A549 (cell line): ENCODE measurements at regions of chr4 and their contacts with region 1.

Region 1: DNA sequence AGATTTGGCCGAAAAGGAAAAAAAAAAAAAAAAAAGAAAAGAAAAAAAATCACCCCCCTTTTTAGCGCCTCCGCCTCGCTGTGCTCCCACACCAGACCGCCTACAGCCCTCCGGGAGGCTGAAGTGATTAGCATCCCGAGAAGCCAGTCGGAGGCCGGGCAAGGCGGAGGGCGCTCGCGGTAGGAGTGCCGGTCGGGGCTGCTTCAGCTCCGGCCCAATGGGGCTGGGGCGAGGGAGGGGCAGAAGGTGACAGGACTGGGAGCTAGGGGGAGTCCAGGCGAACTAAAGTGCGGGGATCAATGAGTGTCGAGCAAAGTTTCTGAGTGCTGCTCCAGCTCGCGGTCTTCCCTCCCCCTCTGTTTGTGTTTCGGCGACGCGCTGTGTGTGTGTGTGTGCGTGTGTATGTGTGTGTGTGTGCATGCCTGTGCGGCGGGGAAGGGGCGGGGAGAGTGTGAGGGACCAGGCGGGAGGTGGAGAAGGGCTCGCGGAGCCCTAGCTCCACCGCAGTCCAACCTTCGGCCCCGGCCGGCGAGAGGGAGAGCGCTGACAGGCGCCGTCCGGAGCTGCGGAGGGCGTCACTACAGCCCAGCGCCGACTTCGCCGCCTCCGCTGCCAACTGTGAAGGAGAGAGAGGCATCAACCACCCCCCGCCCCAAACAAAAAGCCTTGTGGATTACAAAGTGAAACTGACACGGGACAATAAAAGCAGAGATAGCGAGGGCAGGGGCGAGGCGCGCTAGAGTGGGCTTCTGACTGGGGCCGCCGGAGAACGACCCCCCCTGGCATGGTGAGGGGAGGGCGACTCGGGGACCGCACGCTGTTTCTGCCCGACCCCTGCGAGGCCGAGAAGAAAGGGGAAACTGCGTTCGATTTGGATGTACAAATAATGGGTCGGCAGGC is at the start of gene FAT4:
- DNase-seq: peak; percentile 67 to 88
- ATAC-seq: peak; percentile 80 to 91
- H3K4me3 ChIP-seq: peak within 1 kb of the TSS; percentile 87
- H3K27ac ChIP-seq: peak within 1 kb of the TSS; percentile 47 to 79; a peak in 5 of 6 replicates
- H3K4me1 ChIP-seq: peaks cover 7% of the 10 kb centered on the region; the same call in 2 of the 3 replicates
- CTCF ChIP-seq: no peak
- EP300 ChIP-seq: no peak
- POLR2A ChIP-seq: peak; percentile 13; the same call in 1 of the 2 replicates
- RAD21 ChIP-seq: no peak
- polyA plus RNA-seq, gene FAT4: 1.1 and 1.4 TPM in 2 replicates

Region 2: GRCh38 chr4:125072269-125072668 is 242.7 kb before region 1 on chr4:
- CTCF ChIA-PET with region 1: no interaction called
- POLR2A ChIA-PET with region 1: no interaction called
- DNase-seq: no peak
- ATAC-seq: no peak
- H3K4me3 ChIP-seq: no peak overlapping the region
- H3K27ac ChIP-seq: no peak overlapping the region
- H3K4me1 ChIP-seq: no peaks in the 10 kb centered on the region
- CTCF ChIP-seq: no peak
- EP300 ChIP-seq: no peak
- POLR2A ChIP-seq: no peak
- RAD21 ChIP-seq: no peak

Region 3: DNA sequence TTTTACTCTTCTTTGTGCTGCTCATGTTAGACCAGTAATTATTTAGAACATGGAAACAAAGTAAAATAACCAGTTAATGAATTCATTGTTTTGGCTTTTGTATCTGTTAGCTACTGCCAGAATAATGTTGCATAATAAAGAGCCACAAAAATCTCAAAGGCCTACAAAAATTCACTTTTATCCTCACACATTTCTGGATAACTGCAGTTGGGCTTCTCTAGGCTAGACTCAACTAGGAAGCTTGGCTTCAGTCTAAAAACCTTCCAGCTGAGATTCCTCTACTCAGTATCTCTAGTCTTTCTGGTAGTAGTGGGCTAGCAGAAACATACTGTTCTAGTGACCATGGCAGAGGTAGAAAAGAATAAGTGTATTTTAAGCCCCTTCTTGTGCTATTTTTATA is 72.8 kb after region 1 on chr4:
- CTCF ChIA-PET with region 1: no interaction called
- POLR2A ChIA-PET with region 1: no interaction called
- DNase-seq: no peak
- ATAC-seq: no peak
- H3K4me3 ChIP-seq: no peak overlapping the region
- H3K27ac ChIP-seq: no peak overlapping the region
- H3K4me1 ChIP-seq: peaks cover 21% of the 10 kb centered on the region; the same call in 2 of the 3 replicates
- CTCF ChIP-seq: no peak
- EP300 ChIP-seq: no peak
- POLR2A ChIP-seq: no peak
- RAD21 ChIP-seq: no peak

Region 4: DNA sequence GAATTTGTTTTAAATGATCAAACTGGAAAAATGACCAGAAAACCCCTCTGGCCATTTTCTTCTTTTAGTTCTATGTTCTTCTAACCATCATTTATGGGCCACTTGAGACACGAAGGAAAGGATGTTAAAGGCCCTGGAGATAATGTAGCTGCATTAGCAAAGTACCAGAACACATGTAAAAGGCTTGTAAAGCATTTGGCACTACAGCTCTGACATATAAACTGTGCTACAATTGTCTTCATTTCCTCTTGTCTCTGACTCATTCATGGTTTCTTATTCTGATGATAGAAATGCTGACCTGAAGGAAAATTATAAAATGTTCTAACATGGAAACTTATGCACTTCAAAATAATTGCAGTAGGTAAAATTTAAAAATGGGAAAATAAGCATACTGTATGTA is 388.5 kb after region 1 on chr4:
- CTCF ChIA-PET with region 1: no interaction called
- POLR2A ChIA-PET with region 1: no interaction called
- DNase-seq: no peak
- ATAC-seq: no peak
- H3K4me3 ChIP-seq: no peak overlapping the region
- H3K27ac ChIP-seq: no peak overlapping the region
- H3K4me1 ChIP-seq: 0 out of 3 replicates have a peak, but pooled peaks cover 3% of the 10 kb centered on the region
- CTCF ChIP-seq: no peak
- EP300 ChIP-seq: no peak
- POLR2A ChIP-seq: no peak
- RAD21 ChIP-seq: no peak

Region 5: GRCh38 chr4:125744891-125745364 is 430.0 kb after region 1 on chr4:
- CTCF ChIA-PET with region 1: interaction called, 10 read pairs
- POLR2A ChIA-PET with region 1: no interaction called
- DNase-seq: no peak
- ATAC-seq: no peak
- H3K4me3 ChIP-seq: no peak overlapping the region
- H3K27ac ChIP-seq: no peak overlapping the region
- H3K4me1 ChIP-seq: no peaks in the 10 kb centered on the region
- CTCF ChIP-seq: no peak
- EP300 ChIP-seq: no peak
- POLR2A ChIP-seq: no peak
- RAD21 ChIP-seq: no peak

Region 6: DNA sequence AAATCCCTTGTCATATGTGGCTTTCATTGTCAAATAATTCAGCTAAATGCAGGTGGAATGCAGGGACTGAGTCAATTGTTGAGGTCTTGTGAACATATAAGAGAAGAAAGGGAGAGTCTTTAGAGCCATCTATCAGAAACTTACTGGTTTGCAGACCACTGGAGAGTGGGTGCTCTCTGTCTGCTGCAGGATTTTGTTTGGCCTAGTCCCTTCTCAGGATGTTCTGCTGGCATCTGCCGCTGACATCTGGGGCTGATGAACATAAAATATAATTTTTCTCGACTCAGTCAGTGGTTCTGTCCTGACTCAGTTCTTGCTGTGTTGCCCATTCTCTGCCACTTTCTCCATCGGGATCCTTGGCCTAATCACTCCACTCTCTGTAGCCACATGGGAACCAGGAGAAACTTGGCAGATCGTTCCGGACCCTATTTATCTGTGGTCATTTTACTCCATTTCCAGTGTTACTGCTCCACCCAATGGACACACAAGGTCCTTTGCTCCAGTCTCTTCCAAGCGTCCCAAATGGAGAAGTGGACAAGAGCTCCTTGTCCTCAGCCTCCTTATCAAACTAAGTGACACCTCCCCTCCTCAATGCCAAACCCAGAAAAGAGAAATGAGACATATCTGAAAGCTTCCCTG is 436.0 kb after region 1 on chr4:
- CTCF ChIA-PET with region 1: interaction called, 25 read pairs
- POLR2A ChIA-PET with region 1: no interaction called
- DNase-seq: peak; percentile 17 to 68
- ATAC-seq: peak; percentile 95 to 97
- H3K4me3 ChIP-seq: no peak overlapping the region
- H3K27ac ChIP-seq: no peak overlapping the region
- H3K4me1 ChIP-seq: no peaks in the 10 kb centered on the region
- CTCF ChIP-seq: peak; percentile 55
- EP300 ChIP-seq: no peak
- POLR2A ChIP-seq: no peak
- RAD21 ChIP-seq: peak; percentile 78 to 86